ENCODE measurements at regions of chr10 and their contacts with region 1.

Region 1: GRCh38 chr10:129888784-129889616 is 75.1 kb downstream of the EBF3 start:
- DNase-seq: no peak
- ATAC-seq: peak; percentile 94
- H3K4me3 ChIP-seq: no peak overlapping the region
- H3K27ac ChIP-seq: no peak overlapping the region
- H3K4me1 ChIP-seq: no peaks in the 10 kb centered on the region
- H3K27me3 ChIP-seq: peaks cover 2% of the 10 kb centered on the region; the same call in 1 of the 2 replicates
- CTCF ChIP-seq: peak; percentile 93

Region 2: DNA sequence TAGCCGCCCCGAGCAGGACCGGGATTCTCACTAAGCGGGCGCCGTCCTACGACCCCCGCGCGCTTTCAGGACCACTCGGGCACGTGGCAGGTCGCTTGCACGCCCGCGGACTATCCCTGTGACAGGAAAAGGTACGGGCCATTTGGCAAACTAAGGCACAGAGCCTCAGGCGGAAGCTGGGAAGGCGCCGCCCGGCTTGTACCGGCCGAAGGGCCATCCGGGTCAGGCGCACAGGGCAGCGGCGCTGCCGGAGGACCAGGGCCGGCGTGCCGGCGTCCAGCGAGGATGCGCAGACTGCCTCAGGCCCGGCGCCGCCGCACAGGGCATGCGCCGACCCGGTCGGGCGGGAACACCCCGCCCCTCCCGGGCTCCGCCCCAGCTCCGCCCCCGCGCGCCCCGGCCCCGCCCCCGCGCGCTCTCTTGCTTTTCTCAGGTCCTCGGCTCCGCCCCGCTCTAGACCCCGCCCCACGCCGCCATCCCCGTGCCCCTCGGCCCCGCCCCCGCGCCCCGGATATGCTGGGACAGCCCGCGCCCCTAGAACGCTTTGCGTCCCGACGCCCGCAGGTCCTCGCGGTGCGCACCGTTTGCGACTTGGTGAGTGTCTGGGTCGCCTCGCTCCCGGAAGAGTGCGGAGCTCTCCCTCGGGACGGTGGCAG is 422.2 kb before region 1 on chr10 and contains the start of gene MGMT:
- CTCF ChIA-PET with region 1: interaction called, 13 read pairs
- POLR2A ChIA-PET with region 1: no interaction called
- in situ Hi-C with region 1: no loop called
- intact Hi-C with region 1: no loop called
- DNase-seq: peak; percentile 5
- ATAC-seq: peak; percentile 97
- H3K4me3 ChIP-seq: peak within 1 kb of the TSS; percentile 76 to 81
- H3K27ac ChIP-seq: peak within 1 kb of the TSS; percentile 89
- H3K4me1 ChIP-seq: peaks cover 6% of the 10 kb centered on the region
- H3K27me3 ChIP-seq: no peaks in the 10 kb centered on the region
- CTCF ChIP-seq: no peak
- total RNA-seq, gene MGMT: 27.3 TPM

Region 3: GRCh38 chr10:130110246-130111112 is 221.5 kb after region 1 on chr10 and contains the start of gene C10orf143:
- CTCF ChIA-PET with region 1: no interaction called
- POLR2A ChIA-PET with region 1: interaction called, 10 read pairs
- in situ Hi-C with region 1: no loop called
- intact Hi-C with region 1: no loop called
- DNase-seq: peak; percentile 90
- ATAC-seq: peak; percentile 95
- H3K4me3 ChIP-seq: peak within 1 kb of the TSS; percentile 77 to 91
- H3K27ac ChIP-seq: peak within 1 kb of the TSS; percentile 99
- H3K4me1 ChIP-seq: peaks cover 9% of the 10 kb centered on the region
- H3K27me3 ChIP-seq: no peaks in the 10 kb centered on the region
- CTCF ChIP-seq: no peak
- total RNA-seq, gene C10orf143: 1.0 TPM

Region 4: DNA sequence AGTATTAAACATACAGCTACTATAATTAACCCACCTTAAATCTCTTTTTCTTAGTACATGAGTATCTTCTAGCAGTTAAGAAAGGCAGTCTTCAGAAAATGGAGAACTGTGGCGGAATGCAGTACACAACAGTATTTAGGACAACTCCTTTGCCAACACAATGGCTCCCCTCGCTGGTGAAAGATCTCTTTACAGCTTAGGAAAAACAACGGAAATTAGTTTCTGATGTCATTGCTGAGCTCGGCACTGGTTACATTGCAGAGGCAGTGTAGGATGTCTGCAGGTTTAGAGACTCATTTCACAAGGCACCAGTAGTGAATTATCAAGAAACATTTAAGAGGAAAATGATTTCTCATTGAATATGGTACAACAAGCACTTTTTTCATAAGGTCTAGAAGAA is 290.6 kb after region 1 on chr10:
- CTCF ChIA-PET with region 1: interaction called, 13 read pairs
- POLR2A ChIA-PET with region 1: no interaction called
- in situ Hi-C with region 1: no loop called
- intact Hi-C with region 1: no loop called
- DNase-seq: no peak
- ATAC-seq: peak; percentile 79
- H3K4me3 ChIP-seq: no peak overlapping the region
- H3K27ac ChIP-seq: no peak overlapping the region
- H3K4me1 ChIP-seq: no peaks in the 10 kb centered on the region
- H3K27me3 ChIP-seq: no peaks in the 10 kb centered on the region
- CTCF ChIP-seq: peak; percentile 67

Measured in Panc1 (cell line).